SK-N-SH (cell line): ENCODE measurements at regions of chr3 and their contacts with region 1.

Region 1: DNA sequence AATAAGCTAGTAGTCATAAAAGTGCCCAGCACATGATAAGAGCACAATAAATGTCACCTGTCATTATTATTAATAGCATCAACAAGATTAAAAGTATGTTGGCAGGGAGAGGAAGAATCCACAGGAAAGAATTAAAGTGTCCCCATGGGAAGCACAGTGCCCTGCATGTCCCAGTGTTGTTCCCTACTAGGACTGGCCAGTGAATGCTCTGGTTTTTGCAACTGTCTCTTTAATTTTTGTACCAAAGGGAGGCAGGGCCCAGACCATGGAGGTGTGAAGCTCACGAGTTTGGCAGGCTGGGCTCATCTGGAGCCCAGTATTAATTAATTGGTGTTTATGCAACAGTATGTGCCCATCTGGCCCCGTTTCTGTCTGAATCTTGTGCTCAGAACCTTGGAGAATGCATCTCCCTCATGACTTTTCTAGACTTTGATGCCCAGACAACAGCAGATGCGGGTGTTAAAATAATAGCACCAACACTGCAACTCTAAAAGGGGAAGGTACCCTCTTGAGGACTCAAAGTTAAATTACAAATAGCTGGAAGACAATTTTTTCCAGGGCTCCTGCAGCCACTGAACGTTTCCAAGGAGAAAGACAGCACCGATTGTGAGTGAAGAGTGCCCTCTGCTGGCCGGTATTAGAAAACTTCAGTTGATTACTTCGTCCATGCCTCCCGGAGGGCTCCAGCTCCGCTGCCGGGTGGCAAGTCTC is 71.9 kb upstream of the SPATA12 start:
- DNase-seq: peak; percentile 71
- H3K4me3 ChIP-seq: no peak overlapping the region; a peak in 1 of 4 replicates
- H3K27ac ChIP-seq: no peak overlapping the region
- H3K4me1 ChIP-seq: peaks cover 4 to 20% of the 10 kb centered on the region in 2 experiments; a peak in 2 of 4 replicates
- H3K27me3 ChIP-seq: no peaks in the 10 kb centered on the region
- CTCF ChIP-seq: peak; percentile 84
- EP300 ChIP-seq: no peak
- RAD21 ChIP-seq: peak; percentile 99

Region 2: GRCh38 chr3:56684029-56684428 is 304.6 kb before region 1 on chr3:
- CTCF ChIA-PET with region 1: interaction called, 11 read pairs
- POLR2A ChIA-PET with region 1: no interaction called
- DNase-seq: no peak
- H3K4me3 ChIP-seq: no peak overlapping the region
- H3K27ac ChIP-seq: no peak overlapping the region
- H3K4me1 ChIP-seq: peaks cover 0 to 15% of the 10 kb centered on the region in 2 experiments; a peak in 1 of 4 replicates
- H3K27me3 ChIP-seq: no peaks in the 10 kb centered on the region
- CTCF ChIP-seq: no peak
- EP300 ChIP-seq: no peak
- RAD21 ChIP-seq: no peak

Region 3: DNA sequence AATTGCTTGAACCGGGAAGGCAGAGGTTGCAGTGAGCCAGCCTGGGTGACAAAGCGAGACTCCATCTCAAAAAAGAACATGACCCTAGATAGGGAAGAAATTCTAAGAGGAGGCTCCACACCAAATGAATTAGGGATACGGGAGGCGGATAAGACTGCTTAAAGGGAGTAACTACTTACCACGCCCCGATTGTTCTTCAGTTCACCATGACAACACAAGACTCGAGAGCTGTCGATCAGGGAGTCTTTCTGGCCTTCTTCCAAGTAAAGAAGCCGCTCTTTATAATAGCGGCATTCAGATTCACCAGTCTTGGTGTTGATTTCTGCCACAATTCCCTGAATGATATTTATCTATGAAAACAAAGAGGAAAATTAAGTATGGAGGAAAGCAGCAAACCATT is 251.6 kb before region 1 on chr3:
- CTCF ChIA-PET with region 1: interaction called, 11 read pairs
- POLR2A ChIA-PET with region 1: no interaction called
- DNase-seq: no peak
- H3K4me3 ChIP-seq: no peak overlapping the region
- H3K27ac ChIP-seq: no peak overlapping the region
- H3K4me1 ChIP-seq: no peaks in the 10 kb centered on the region
- H3K27me3 ChIP-seq: no peaks in the 10 kb centered on the region
- CTCF ChIP-seq: no peak
- EP300 ChIP-seq: no peak
- RAD21 ChIP-seq: no peak

Region 4: DNA sequence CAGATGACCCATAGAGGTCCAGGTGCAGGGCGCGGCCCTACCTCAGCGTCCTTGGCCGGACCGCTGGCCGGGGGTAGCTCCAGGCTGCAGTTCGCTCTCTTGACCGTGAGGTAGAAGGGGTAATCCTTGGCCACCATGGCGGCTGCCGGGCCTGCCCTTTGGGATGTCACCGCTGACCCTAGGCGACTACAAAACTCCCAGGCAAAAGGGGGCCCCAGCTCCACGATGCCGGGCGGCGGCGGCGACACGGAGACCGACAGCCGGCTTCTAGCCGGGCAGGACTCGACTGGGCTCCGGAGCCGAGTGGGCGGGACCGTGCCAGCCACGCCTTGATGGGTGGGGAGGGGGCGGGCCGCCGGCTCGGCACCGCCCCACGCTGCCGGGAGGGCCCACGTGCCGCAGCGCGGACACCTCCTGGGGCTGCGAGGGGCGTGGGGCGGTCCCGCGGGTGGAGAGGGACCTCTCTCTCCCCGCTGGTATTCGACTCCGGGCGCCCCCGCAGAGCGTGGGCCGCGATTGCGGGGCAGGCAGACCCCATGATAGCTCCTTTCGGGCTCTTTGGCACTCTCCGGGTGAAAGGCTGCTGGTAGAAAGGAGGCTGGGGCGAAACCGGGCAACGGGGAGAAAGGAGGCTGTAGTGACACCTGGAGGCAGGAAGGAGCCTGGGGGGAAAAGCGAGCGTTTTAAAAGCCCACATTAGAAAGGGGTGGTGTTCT is 186.8 kb before region 1 on chr3 and contains the start of gene ARHGEF3:
- CTCF ChIA-PET with region 1: interaction called, 195 read pairs
- POLR2A ChIA-PET with region 1: no interaction called
- DNase-seq: peak; percentile 96
- H3K4me3 ChIP-seq: peak within 1 kb of the TSS; percentile 73 to 75
- H3K27ac ChIP-seq: peak within 1 kb of the TSS in 1 of 2 experiments; percentile 25; a peak in 1 of 4 replicates
- H3K4me1 ChIP-seq: peaks cover 8 to 28% of the 10 kb centered on the region in 2 experiments; a peak in 2 of 4 replicates
- H3K27me3 ChIP-seq: no peaks in the 10 kb centered on the region
- CTCF ChIP-seq: peak; percentile 62
- EP300 ChIP-seq: no peak
- RAD21 ChIP-seq: peak; percentile 30; the same call in 1 of the 2 replicates
- polyA plus RNA-seq, gene ARHGEF3: 5.7 and 5.9 TPM in 2 replicates

Region 5: GRCh38 chr3:56855856-56856512 is 132.6 kb before region 1 on chr3:
- CTCF ChIA-PET with region 1: interaction called, 23 read pairs
- POLR2A ChIA-PET with region 1: no interaction called
- DNase-seq: peak; percentile 46
- H3K4me3 ChIP-seq: no peak overlapping the region
- H3K27ac ChIP-seq: peak overlapping the region in 1 of 2 experiments; percentile 14; a peak in 1 of 4 replicates
- H3K4me1 ChIP-seq: peaks cover 6% of the 10 kb centered on the region in 2 experiments; a peak in 2 of 4 replicates
- H3K27me3 ChIP-seq: no peaks in the 10 kb centered on the region
- CTCF ChIP-seq: peak; percentile 73
- EP300 ChIP-seq: no peak
- RAD21 ChIP-seq: peak; percentile 76

Region 6: GRCh38 chr3:56904552-56905215 is 83.9 kb before region 1 on chr3:
- CTCF ChIA-PET with region 1: interaction called, 12 read pairs
- POLR2A ChIA-PET with region 1: no interaction called
- DNase-seq: peak; percentile 53
- H3K4me3 ChIP-seq: no peak overlapping the region
- H3K27ac ChIP-seq: no peak overlapping the region
- H3K4me1 ChIP-seq: peaks cover 0 to 6% of the 10 kb centered on the region in 2 experiments; a peak in 1 of 4 replicates
- H3K27me3 ChIP-seq: no peaks in the 10 kb centered on the region
- CTCF ChIP-seq: no peak
- EP300 ChIP-seq: peak in 1 of 2 experiments; percentile 42; a peak in 1 of 4 replicates
- RAD21 ChIP-seq: no peak

Region 7: DNA sequence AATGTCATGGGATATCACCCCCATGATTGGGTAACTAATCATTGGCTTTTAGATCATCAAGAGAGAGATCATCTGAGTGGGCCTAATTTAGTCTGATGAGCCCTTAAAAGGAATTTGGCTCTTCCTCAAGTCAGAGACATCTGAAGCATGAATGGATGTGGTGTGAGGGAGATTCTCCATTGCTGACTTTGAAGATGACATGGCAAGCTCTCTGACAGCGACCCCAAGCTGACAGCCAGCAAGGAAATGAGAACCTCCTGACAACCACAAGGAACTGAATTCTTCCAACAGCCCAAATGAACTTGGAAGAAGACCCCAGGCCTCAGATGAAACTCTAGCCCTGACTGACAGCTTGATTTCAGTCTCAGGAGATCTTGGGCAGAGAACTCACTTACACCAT is 36.6 kb before region 1 on chr3:
- CTCF ChIA-PET with region 1: no interaction called
- POLR2A ChIA-PET with region 1: no interaction called
- DNase-seq: no peak
- H3K4me3 ChIP-seq: no peak overlapping the region
- H3K27ac ChIP-seq: no peak overlapping the region
- H3K4me1 ChIP-seq: peaks cover 0 to 9% of the 10 kb centered on the region in 2 experiments; a peak in 1 of 4 replicates
- H3K27me3 ChIP-seq: no peaks in the 10 kb centered on the region
- CTCF ChIP-seq: no peak
- EP300 ChIP-seq: no peak
- RAD21 ChIP-seq: no peak

Region 8: GRCh38 chr3:57268416-57268815 is 279.8 kb after region 1 on chr3:
- CTCF ChIA-PET with region 1: no interaction called
- POLR2A ChIA-PET with region 1: no interaction called
- DNase-seq: no peak
- H3K4me3 ChIP-seq: no peak overlapping the region
- H3K27ac ChIP-seq: no peak overlapping the region
- H3K4me1 ChIP-seq: no peaks in the 10 kb centered on the region
- H3K27me3 ChIP-seq: no peaks in the 10 kb centered on the region
- CTCF ChIP-seq: no peak
- EP300 ChIP-seq: no peak
- RAD21 ChIP-seq: no peak